ENCODE measurements at regions of chr7 and their contacts with region 1.

Region 1: GRCh38 chr7:44581879-44582603 is at the start of gene TMED4:
- DNase-seq: peak; percentile 100
- H3K4me3 Mint-ChIP-seq: peak within 1 kb of the TSS; percentile 88
- H3K27ac Mint-ChIP-seq: peak within 1 kb of the TSS; percentile 93
- H3K4me1 Mint-ChIP-seq: peaks cover 23% of the 10 kb centered on the region
- H3K27me3 Mint-ChIP-seq: peaks cover 2% of the 10 kb centered on the region
- total RNA-seq, gene TMED4: 70.3 and 75.1 TPM in 2 replicates

Region 2: GRCh38 chr7:44606450-44607254 is 24.6 kb after region 1 on chr7 and contains the start of gene OGDH:
- intact Hi-C with region 1: loop called (anchors 1 kb)
- DNase-seq: peak; percentile 98
- H3K4me3 Mint-ChIP-seq: peak within 1 kb of the TSS; percentile 99
- H3K27ac Mint-ChIP-seq: peak within 1 kb of the TSS; percentile 100
- H3K4me1 Mint-ChIP-seq: peaks cover 23% of the 10 kb centered on the region
- H3K27me3 Mint-ChIP-seq: peaks cover 5% of the 10 kb centered on the region
- total RNA-seq, gene OGDH: 105 and 109 TPM in 2 replicates

Region 3: DNA sequence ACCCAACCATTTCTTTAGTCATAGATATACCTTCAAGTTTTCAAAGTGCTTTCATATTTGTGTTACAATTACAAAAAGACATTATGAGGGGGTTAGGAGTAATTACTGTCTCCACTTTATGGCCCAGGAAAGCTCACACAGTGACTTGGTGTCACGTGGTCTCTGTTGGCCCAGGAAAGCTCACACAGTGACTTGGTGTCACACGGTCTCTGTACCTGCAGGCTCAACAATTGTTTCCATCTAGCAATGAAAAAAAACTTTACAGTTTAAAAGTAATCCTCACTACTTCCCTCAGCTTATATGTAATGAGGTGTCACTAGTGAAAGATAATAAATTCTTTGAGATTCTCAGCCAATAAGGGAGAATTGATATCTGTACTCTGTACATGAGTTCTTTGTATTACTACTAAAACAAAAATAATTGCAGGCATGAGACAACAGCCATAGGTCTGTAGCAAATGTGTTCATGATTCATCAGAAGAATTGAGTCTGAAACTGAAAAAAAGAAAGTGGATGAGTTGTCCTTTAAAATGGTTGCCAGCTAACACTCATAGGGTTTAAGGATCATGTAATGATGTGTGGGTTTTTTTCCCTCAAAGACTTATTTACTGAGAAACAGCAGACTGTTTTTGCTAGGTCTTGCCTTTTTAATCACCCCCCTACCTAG is 35.3 kb after region 1 on chr7:
- intact Hi-C with region 1: no loop called
- DNase-seq: no peak
- H3K4me3 Mint-ChIP-seq: peak overlapping the region; percentile 10
- H3K27ac Mint-ChIP-seq: peak overlapping the region; percentile 91
- H3K4me1 Mint-ChIP-seq: peaks cover 60% of the 10 kb centered on the region
- H3K27me3 Mint-ChIP-seq: no peaks in the 10 kb centered on the region

Region 4: DNA sequence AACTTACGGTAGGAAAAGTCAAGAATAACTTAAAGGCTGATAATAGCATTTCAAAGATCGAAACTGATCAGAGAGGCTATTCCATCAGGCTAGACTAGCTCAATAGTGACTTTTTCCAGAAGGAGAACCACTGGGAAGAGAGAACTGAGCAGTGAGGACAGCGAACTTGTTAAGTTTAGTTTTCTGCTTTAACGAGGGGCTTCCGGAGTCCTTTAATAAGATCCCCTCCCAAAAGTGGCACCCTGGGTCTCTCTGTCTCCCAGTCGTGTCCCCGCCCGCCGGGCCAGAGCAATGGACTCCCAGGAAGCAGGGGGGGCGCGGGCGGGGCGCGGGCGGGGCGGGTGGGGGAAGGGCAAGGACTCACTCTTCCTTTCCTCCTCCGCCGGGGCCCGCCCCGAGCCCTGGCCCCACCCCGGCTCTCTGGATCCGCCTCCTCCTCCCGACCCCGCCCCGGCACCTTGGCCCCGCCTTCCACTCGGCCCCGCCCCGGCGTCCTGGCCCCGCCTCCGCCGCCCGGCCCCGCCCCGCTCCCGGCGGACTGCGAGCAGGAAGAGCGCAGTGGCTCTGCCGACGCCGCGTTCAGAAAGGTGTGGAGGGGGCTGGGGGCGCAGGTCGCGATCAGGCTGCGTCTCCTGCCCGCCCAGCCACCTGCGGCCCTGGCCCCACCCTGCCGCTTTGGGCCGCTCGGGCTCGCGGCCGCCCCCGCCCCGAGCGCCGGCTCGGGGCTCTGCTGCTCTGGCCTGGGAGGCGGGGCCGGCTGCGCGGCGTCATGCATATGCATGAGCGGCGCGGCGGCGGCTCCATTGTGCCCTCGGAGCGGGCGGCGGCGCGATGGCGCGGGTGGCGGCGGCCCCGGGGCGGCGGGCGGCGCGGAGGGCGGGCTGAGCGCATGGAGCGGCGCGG is 166.3 kb after region 1 on chr7 and contains the start of gene ZMIZ2:
- intact Hi-C with region 1: loop called (anchors 1 kb)
- DNase-seq: peak; percentile 87
- H3K4me3 Mint-ChIP-seq: peak within 1 kb of the TSS; percentile 85
- H3K27ac Mint-ChIP-seq: peak within 1 kb of the TSS; percentile 94
- H3K4me1 Mint-ChIP-seq: peaks cover 31% of the 10 kb centered on the region
- H3K27me3 Mint-ChIP-seq: no peaks in the 10 kb centered on the region
- total RNA-seq, gene ZMIZ2: 105 TPM in 2 replicates

Region 5: GRCh38 chr7:44867073-44867995 is 285.3 kb after region 1 on chr7:
- intact Hi-C with region 1: no loop called
- DNase-seq: no peak
- H3K4me3 Mint-ChIP-seq: no peak overlapping the region
- H3K27ac Mint-ChIP-seq: no peak overlapping the region
- H3K4me1 Mint-ChIP-seq: peaks cover 7% of the 10 kb centered on the region
- H3K27me3 Mint-ChIP-seq: peaks cover 5% of the 10 kb centered on the region

Region 6: GRCh38 chr7:44986218-44987053 is 404.4 kb after region 1 on chr7:
- intact Hi-C with region 1: loop called (anchors 10 kb)
- DNase-seq: peak; percentile 95
- H3K4me3 Mint-ChIP-seq: peak overlapping the region; percentile 95
- H3K27ac Mint-ChIP-seq: peak overlapping the region; percentile 99
- H3K4me1 Mint-ChIP-seq: peaks cover 62% of the 10 kb centered on the region
- H3K27me3 Mint-ChIP-seq: no peaks in the 10 kb centered on the region

Measured in activated T-helper 2 cell treated with anti-CD3 and anti-CD28 coated beads, Interferon-gamma antibody, Interleukin-2, Interleukin-4, amounts not matched to agents 10 μg/mL and 5 μg/mL and 100 μg/mL, durations not matched to agents 14 hours and 24 hours and 36 hours (primary cell).